K562 (cell line): ENCODE measurements at regions of chr1 and their contacts with region 1.

Region 1: GRCh38 chr1:25099343-25099951 is 132.9 kb downstream of the SYF2 start:
- DNase-seq: no peak
- ATAC-seq: no peak
- H3K4me3 ChIP-seq: no peak overlapping the region
- H3K27ac ChIP-seq: no peak overlapping the region
- H3K4me1 ChIP-seq: peaks cover 0 to 5% of the 10 kb centered on the region in 2 experiments; a peak in 1 of 5 replicates
- H3K27me3 ChIP-seq: peaks cover 0 to 26% of the 10 kb centered on the region in 2 experiments; a peak in 3 of 5 replicates
- CTCF ChIP-seq: no peak
- EP300 ChIP-seq: no peak
- POLR2A ChIP-seq: no peak
- RAD21 ChIP-seq: no peak

Region 2: GRCh38 chr1:24930204-24931145 is 169.0 kb before region 1 on chr1 and contains the start of gene RUNX3:
- CTCF ChIA-PET with region 1: interaction called, 5 read pairs
- POLR2A ChIA-PET with region 1: no interaction called
- in situ Hi-C with region 1: loop called (anchors 5 kb)
- intact Hi-C with region 1: loop called (anchors 2 kb)
- DNase-seq: peak in 3 of 4 experiments; percentile 46 to 77 (median 76)
- ATAC-seq: no peak
- H3K4me3 ChIP-seq: no peak within 1 kb of the TSS
- H3K27ac ChIP-seq: no peak within 1 kb of the TSS
- H3K4me1 ChIP-seq: peaks cover 0 to 34% of the 10 kb centered on the region in 2 experiments; a peak in 2 of 5 replicates
- H3K27me3 ChIP-seq: peaks cover 72 to 94% of the 10 kb centered on the region in 2 experiments
- CTCF ChIP-seq: no peak
- EP300 ChIP-seq: no peak
- POLR2A ChIP-seq: no peak
- RAD21 ChIP-seq: no peak
- polyA plus RNA-seq, gene RUNX3: 0.01 to 0.04 TPM

Region 3: GRCh38 chr1:25037174-25038074 is 62.0 kb before region 1 on chr1:
- CTCF ChIA-PET with region 1: interaction called, 20 read pairs
- POLR2A ChIA-PET with region 1: no interaction called
- in situ Hi-C with region 1: no loop called
- intact Hi-C with region 1: loop called (anchors 1 kb)
- DNase-seq: peak; percentile 66 to 82 (median 80)
- ATAC-seq: peak; percentile 85
- H3K4me3 ChIP-seq: no peak overlapping the region
- H3K27ac ChIP-seq: no peak overlapping the region
- H3K4me1 ChIP-seq: peaks cover 0 to 7% of the 10 kb centered on the region in 2 experiments; a peak in 2 of 5 replicates
- H3K27me3 ChIP-seq: peaks cover 3 to 58% of the 10 kb centered on the region in 2 experiments; a peak in 4 of 5 replicates
- CTCF ChIP-seq: peak; percentile 86 to 92 (median 87)
- EP300 ChIP-seq: no peak
- POLR2A ChIP-seq: no peak
- RAD21 ChIP-seq: peak; percentile 51 to 76

Region 4: GRCh38 chr1:25113731-25114130 is 14.3 kb after region 1 on chr1:
- CTCF ChIA-PET with region 1: no interaction called
- POLR2A ChIA-PET with region 1: no interaction called
- in situ Hi-C with region 1: no loop called
- intact Hi-C with region 1: no loop called
- DNase-seq: no peak
- ATAC-seq: no peak
- H3K4me3 ChIP-seq: no peak overlapping the region
- H3K27ac ChIP-seq: no peak overlapping the region
- H3K4me1 ChIP-seq: no peaks in the 10 kb centered on the region
- H3K27me3 ChIP-seq: peaks cover 21 to 31% of the 10 kb centered on the region in 2 experiments; a peak in 4 of 5 replicates
- CTCF ChIP-seq: no peak
- EP300 ChIP-seq: no peak
- POLR2A ChIP-seq: no peak
- RAD21 ChIP-seq: no peak

Region 5: DNA sequence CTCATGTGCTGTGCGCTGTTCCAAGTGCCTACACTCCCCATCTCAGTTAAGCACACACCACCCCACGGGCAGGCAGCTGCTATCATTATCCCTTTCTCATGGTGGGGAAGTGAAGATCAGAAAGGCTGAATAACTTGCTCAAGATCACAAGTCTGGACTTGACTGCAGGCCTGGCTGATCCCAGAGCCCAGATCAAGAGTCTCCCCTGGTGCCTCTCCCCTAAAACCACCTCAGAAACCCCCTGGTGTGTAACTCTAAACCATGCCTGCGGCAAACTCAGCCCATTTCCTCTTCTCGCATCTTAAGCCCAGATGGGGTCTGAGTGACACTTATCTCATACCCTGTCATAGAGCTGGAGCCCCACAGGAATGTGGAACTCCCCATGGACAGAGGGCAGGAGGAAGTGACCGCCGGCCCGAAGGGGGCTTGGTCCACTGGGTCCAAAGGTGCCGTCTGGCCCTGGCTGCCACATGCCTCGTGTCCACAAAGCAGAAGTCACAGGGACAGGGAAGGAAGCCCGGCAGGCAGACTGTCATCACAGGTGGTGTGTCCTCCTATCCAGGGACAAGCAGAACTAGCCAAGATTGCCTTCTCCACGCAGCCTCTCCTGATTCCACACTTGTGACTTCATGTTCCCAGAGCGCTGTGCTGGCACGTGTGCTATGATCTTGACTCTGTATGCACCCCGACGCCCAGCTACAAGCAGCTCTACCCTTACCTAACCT is 40.8 kb after region 1 on chr1:
- CTCF ChIA-PET with region 1: no interaction called
- POLR2A ChIA-PET with region 1: no interaction called
- in situ Hi-C with region 1: no loop called
- intact Hi-C with region 1: no loop called
- DNase-seq: no peak
- ATAC-seq: no peak; the same call in 2 of the 3 replicates
- H3K4me3 ChIP-seq: no peak overlapping the region
- H3K27ac ChIP-seq: no peak overlapping the region
- H3K4me1 ChIP-seq: no peaks in the 10 kb centered on the region
- H3K27me3 ChIP-seq: peaks cover 48 to 66% of the 10 kb centered on the region in 2 experiments
- CTCF ChIP-seq: no peak
- EP300 ChIP-seq: no peak
- POLR2A ChIP-seq: no peak
- RAD21 ChIP-seq: no peak

Region 6: GRCh38 chr1:25204797-25205480 is 105.5 kb after region 1 on chr1:
- CTCF ChIA-PET with region 1: interaction called, 3 read pairs
- POLR2A ChIA-PET with region 1: no interaction called
- in situ Hi-C with region 1: no loop called
- intact Hi-C with region 1: loop called (anchors 5 kb)
- DNase-seq: peak; percentile 65 to 77 (median 74)
- ATAC-seq: peak; percentile 84
- H3K4me3 ChIP-seq: no peak overlapping the region
- H3K27ac ChIP-seq: no peak overlapping the region
- H3K4me1 ChIP-seq: no peaks in the 10 kb centered on the region
- H3K27me3 ChIP-seq: peaks cover 21 to 25% of the 10 kb centered on the region in 2 experiments; a peak in 4 of 5 replicates
- CTCF ChIP-seq: peak; percentile 64 to 88 (median 79)
- EP300 ChIP-seq: no peak
- POLR2A ChIP-seq: no peak
- RAD21 ChIP-seq: peak; percentile 43 to 71; a peak in 3 of 4 replicates